ENCODE measurements at regions of chr10 and their contacts with region 1.

Region 1: DNA sequence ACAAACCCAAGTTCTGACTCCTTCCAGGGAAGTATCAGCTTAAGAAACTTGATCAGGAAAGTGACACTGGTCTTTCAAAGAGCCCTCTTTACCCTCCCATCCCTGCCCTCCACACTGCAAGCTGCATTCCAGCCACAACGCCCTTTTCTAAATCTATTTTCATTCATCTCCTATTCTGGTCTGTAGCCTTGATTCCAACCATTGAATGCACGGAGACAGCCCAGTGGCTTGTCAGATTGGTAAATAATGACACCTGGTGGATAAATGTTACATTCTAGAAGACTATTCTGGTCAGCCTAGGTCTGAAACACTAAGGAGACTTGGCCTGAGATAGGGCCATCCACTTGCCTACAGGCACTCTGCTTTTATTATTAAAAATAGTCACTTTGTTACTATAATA is 20.9 kb downstream of the MORN4 start:
- DNase-seq: no peak
- H3K4me3 Mint-ChIP-seq: no peak overlapping the region
- H3K27ac Mint-ChIP-seq: no peak overlapping the region
- H3K4me1 Mint-ChIP-seq: no peaks in the 10 kb centered on the region
- H3K27me3 Mint-ChIP-seq: no peaks in the 10 kb centered on the region

Region 2: DNA sequence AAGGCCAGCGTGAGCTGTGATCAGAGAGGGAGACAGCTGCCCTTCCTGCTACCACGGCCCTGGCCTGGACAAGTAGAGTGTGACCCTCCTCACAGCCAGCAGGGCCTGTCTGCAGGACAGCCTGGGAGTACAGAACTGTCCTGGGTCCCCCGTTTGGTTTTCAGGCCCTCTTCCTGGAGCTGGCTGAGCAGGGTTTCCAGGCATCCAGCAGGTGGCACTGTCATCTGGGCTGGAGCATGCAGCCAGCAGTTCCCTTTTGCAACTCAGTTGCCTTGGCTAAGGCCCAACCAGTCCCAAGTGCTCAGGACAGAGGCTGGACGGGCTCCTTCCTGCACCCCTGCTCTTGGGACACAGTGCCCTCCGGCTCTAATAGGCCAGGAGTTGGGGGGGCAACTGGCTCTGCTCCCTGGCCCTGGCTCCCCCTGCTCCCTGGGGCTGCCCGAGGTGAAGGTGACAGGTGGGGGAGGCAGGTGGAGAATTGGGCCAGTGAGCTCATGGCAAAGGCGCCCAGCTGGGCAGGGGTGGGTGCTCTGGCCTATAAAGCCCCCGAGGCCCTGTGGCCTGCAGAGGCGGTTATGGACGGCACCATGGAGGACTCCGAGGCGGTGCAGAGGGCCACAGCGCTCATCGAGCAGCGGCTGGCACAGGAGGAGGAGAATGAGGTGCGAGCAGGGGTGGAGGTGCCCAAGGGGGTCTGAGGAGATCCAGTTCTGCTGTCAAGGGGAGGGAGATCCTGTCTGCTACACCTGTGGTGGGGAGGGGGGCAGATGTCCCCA is 40.0 kb before region 1 on chr10 and contains the start of gene ANKRD2:
- intact Hi-C with region 1: loop called (anchors 1 kb)
- DNase-seq: peak; percentile 87
- H3K4me3 Mint-ChIP-seq: no peak within 1 kb of the TSS
- H3K27ac Mint-ChIP-seq: no peak within 1 kb of the TSS
- H3K4me1 Mint-ChIP-seq: no peaks in the 10 kb centered on the region
- H3K27me3 Mint-ChIP-seq: peaks cover 4% of the 10 kb centered on the region
- total RNA-seq, gene ANKRD2: not detected in 2 replicates